CD8-positive, alpha-beta T cell (primary cell): ENCODE measurements at regions of chr16 and their contacts with region 1.

Region 1: DNA sequence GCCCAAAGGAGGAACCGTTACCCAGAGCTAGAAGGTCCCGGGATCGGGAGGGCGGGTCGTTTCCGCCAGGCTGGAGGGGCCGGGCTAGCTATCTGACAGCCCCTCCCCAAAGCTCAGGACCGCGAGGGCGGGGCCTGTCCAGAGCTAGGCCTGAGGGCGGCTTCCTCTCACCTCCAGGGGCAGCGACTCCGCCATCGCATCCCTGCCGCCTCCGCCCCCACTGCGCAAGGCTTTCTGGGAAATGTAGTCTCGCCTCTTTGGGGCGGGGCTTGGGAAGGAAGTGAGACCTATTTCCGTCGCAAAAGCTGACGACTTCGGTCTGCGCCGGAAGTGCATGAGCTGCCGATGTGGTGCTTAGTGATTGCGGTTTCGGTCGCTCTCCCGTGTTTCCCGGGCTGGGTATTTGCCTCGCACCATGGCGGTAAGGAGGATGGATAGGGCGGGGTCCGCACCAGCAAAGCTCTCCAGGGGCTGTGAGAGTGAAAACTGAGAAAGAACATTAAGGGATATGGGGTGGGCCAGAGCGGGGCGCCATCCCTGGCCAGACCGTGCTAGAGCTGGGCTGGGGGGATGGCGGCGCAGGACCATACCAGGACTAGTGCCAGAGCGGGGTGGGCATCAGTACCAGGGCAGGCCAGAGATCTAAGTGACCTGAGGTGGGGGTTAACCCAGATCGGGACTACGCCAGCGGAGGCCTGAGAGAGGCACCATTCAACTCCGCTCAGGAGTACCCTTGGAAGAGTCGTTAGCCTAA is at the start of gene TMEM208:
- DNase-seq: peak; percentile 95 to 99 (median 98)
- ATAC-seq: peak; percentile 98
- H3K4me3 ChIP-seq: peak within 1 kb of the TSS; percentile 95 to 100
- H3K4me3 Mint-ChIP-seq: peak within 1 kb of the TSS; percentile 100
- H3K27ac ChIP-seq: peak within 1 kb of the TSS; percentile 83 to 93
- H3K27ac Mint-ChIP-seq: peak within 1 kb of the TSS; percentile 98
- H3K4me1 ChIP-seq: peaks cover 26% of the 10 kb centered on the region
- H3K4me1 Mint-ChIP-seq: peaks cover 47% of the 10 kb centered on the region
- H3K27me3 ChIP-seq: no peaks in the 10 kb centered on the region
- H3K27me3 Mint-ChIP-seq: no peaks in the 10 kb centered on the region
- CTCF ChIP-seq: no peak
- total RNA-seq, gene TMEM208: 37.1 to 44.7 TPM

Region 2: DNA sequence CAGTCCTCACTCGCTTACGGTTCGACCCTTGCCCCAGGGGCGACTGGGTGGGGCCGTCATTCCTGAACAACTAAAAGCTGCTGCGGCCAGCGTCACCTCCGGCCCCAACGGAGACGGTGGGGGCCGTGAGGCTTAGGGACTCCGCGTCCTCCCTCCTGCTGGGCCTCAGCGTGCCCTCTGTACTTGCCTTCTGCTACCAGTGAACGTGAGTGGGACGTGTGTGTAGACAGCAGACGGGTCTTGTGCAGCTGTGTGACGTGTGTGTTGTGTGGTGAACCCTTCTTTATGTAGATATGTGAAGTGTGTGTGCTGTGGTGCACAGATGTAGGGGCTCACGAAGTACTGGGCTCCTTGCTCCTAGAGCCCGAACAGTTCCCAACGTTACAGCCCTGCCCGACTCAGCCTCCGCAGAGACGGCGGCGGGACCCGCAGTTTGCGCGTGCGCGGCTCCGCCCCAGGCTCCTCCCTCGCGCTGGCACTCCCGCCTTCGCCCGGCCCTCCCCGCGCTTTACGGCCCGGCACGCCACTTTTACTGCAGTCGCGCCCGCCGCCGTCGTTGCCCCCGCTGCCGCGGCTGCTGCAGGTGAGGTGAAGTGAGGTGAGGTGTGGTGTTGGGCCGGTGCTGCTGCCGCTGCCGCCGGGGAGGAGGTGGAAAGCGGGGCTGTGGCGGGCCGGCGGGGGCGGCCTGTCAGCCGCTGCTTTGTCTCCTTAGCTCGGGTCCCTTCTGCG is 117.4 kb before region 1 on chr16 and contains the start of gene PHAF1:
- CTCF ChIA-PET with region 1: no interaction called
- POLR2A ChIA-PET with region 1: no interaction called
- intact Hi-C with region 1: loop called in 1 of 2 experiments (anchors 1 kb)
- DNase-seq: peak; percentile 91 to 99 (median 96)
- ATAC-seq: peak; percentile 93
- H3K4me3 ChIP-seq: peak within 1 kb of the TSS; percentile 83 to 92
- H3K4me3 Mint-ChIP-seq: peak within 1 kb of the TSS; percentile 95
- H3K27ac ChIP-seq: peak within 1 kb of the TSS; percentile 26 to 51
- H3K27ac Mint-ChIP-seq: peak within 1 kb of the TSS; percentile 89
- H3K4me1 ChIP-seq: peaks cover 19% of the 10 kb centered on the region
- H3K4me1 Mint-ChIP-seq: peaks cover 32% of the 10 kb centered on the region
- H3K27me3 ChIP-seq: no peaks in the 10 kb centered on the region
- H3K27me3 Mint-ChIP-seq: no peaks in the 10 kb centered on the region
- CTCF ChIP-seq: no peak
- total RNA-seq, gene PHAF1: 9.6 to 9.7 TPM

Region 3: DNA sequence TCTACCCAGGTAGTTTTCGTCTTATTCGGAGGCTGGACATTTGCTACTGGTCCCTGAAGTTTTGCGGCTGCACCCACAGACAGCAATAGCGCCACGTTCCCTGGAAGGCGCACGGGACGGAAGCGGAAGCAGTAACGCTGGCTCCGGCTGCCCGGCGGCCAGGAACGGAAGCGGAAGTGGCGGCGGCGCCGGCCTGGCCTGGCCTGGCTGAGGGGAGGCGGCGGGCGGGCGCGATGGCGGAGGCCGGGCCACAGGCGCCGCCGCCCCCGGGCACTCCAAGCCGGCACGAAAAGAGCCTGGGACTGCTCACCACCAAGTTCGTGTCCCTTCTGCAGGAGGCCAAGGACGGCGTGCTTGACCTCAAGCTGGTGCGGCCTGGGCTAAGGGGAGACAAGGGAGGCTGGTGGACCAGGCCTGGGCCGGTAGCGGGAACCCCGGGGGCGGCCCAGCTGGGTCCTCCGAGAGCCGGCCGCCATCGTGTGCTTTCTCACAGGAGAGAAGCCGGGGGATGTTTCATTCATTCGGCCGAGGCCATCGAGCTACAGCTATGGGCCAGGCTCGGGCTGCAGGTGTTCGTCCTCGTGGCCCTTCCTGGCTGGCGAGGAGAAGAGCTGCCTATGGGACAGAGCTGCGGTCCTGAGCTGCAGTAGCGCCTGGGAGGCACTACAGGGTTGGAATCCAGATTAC is 34.8 kb before region 1 on chr16 and contains the start of gene E2F4:
- CTCF ChIA-PET with region 1: interaction called, 4 read pairs
- POLR2A ChIA-PET with region 1: interaction called, 3 read pairs
- intact Hi-C with region 1: loop called (anchors 1 kb)
- DNase-seq: peak; percentile 72 to 94 (median 83)
- ATAC-seq: peak; percentile 86
- H3K4me3 ChIP-seq: peak within 1 kb of the TSS; percentile 84 to 100
- H3K4me3 Mint-ChIP-seq: peak within 1 kb of the TSS; percentile 89
- H3K27ac ChIP-seq: peak within 1 kb of the TSS; percentile 84 to 86
- H3K27ac Mint-ChIP-seq: peak within 1 kb of the TSS; percentile 89
- H3K4me1 ChIP-seq: peaks cover 27% of the 10 kb centered on the region
- H3K4me1 Mint-ChIP-seq: peaks cover 45% of the 10 kb centered on the region
- H3K27me3 ChIP-seq: peaks cover 0 to under 1% of the 10 kb centered on the region in 2 experiments
- H3K27me3 Mint-ChIP-seq: peaks cover 2% of the 10 kb centered on the region
- CTCF ChIP-seq: no peak
- total RNA-seq, gene E2F4: 61.9 to 63.8 TPM